PC-9 (cell line): ENCODE measurements at regions of chr15 and their contacts with region 1.

Region 1: GRCh38 chr15:64355944-64356709 is at the start of gene CSNK1G1:
- DNase-seq: peak; percentile 88 to 95
- H3K4me3 ChIP-seq: peak within 1 kb of the TSS; percentile 82
- H3K27ac ChIP-seq: peak within 1 kb of the TSS; percentile 58
- H3K4me1 ChIP-seq: peaks cover 6% of the 10 kb centered on the region
- H3K27me3 ChIP-seq: no peaks in the 10 kb centered on the region
- CTCF ChIP-seq: peak; percentile 61
- total RNA-seq, gene CSNK1G1: 16.4 and 19.6 TPM in 2 replicates

Region 2: GRCh38 chr15:64162870-64163658 is 193.1 kb before region 1 on chr15 and contains the start of gene PPIB:
- CTCF ChIA-PET with region 1: no interaction called
- POLR2A ChIA-PET with region 1: no interaction called
- intact Hi-C with region 1: loop called (anchors 1 kb)
- DNase-seq: peak; percentile 85 to 97
- H3K4me3 ChIP-seq: peak within 1 kb of the TSS; percentile 95
- H3K27ac ChIP-seq: peak within 1 kb of the TSS; percentile 51
- H3K4me1 ChIP-seq: no peaks in the 10 kb centered on the region; the same call in none of the 2 replicates
- H3K27me3 ChIP-seq: no peaks in the 10 kb centered on the region
- CTCF ChIP-seq: no peak; the same call in 1 of the 2 replicates
- total RNA-seq, gene PPIB: 308 and 345 TPM in 2 replicates

Region 3: DNA sequence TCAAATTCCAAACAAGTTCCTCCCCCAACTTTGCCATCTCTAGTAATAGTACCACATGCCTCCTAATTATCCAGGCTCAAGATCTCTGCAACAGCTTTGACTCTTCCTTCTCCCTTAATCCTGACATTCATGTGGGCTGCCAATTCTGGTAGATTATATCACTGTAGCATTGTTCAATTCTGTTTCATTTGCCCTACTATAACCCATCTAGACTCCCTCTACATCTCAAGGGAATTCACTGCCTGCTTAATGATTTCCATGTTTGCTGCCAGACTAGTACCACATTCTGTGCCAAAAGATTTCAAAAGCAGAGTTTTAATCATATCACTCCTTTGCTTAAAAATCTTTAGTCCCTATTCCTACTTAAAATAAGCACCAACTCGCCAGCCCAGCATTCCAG is 158.7 kb before region 1 on chr15:
- CTCF ChIA-PET with region 1: interaction called, 3 read pairs
- POLR2A ChIA-PET with region 1: interaction called, 12 read pairs
- intact Hi-C with region 1: no loop called
- DNase-seq: no peak
- H3K4me3 ChIP-seq: no peak overlapping the region
- H3K27ac ChIP-seq: no peak overlapping the region
- H3K4me1 ChIP-seq: no peaks in the 10 kb centered on the region
- H3K27me3 ChIP-seq: no peaks in the 10 kb centered on the region
- CTCF ChIP-seq: no peak

Region 4: DNA sequence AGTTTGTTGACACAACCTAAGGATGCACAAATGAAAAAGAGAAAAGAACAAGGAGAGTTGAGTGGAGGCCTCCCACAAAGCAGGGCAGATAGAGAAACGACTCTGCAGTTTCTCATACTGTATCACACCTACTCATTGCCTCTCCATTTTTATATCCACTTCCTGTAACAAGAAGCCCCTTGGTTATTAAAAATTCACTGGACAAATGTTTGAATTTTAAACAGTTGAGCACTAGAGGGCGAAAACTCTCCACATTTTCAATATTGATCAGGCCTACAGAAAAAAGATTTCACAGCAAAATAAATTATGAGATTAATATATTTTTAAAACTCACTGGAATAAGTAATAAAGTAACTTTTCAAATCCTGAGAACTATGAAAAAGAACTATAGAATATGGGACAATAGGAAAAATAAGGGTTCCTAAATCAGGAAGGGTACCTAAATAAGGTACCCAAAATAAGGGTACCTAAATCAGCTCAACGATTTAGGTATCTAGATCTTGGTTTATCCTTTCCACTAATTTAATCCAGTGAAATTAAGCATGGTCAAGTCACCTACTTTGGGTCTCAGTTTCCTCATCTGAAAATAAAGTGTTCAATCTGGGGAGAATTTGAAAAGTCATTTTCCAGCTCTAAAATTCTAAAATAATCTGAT is 146.3 kb before region 1 on chr15:
- CTCF ChIA-PET with region 1: interaction called, 3 read pairs
- POLR2A ChIA-PET with region 1: no interaction called
- intact Hi-C with region 1: loop called (anchors 1 kb)
- DNase-seq: peak in 1 of 2 experiments; percentile 61
- H3K4me3 ChIP-seq: no peak overlapping the region
- H3K27ac ChIP-seq: 0 out of 2 replicates have a peak overlapping the region, but pooled peaks have one; percentile 9
- H3K4me1 ChIP-seq: no peaks in the 10 kb centered on the region
- H3K27me3 ChIP-seq: no peaks in the 10 kb centered on the region
- CTCF ChIP-seq: peak; percentile 73

Region 5: GRCh38 chr15:64387562-64388168 is 31.5 kb after region 1 on chr15 and contains the start of gene TRIP4:
- CTCF ChIA-PET with region 1: no interaction called
- POLR2A ChIA-PET with region 1: no interaction called
- intact Hi-C with region 1: loop called (anchors 1 kb)
- DNase-seq: peak; percentile 89 to 94
- H3K4me3 ChIP-seq: peak within 1 kb of the TSS; percentile 95
- H3K27ac ChIP-seq: peak within 1 kb of the TSS; percentile 74
- H3K4me1 ChIP-seq: no peaks in the 10 kb centered on the region
- H3K27me3 ChIP-seq: no peaks in the 10 kb centered on the region
- CTCF ChIP-seq: no peak
- total RNA-seq, gene TRIP4: 15.5 and 18.1 TPM in 2 replicates

Region 6: GRCh38 chr15:64398575-64398974 is 42.4 kb after region 1 on chr15:
- CTCF ChIA-PET with region 1: no interaction called
- POLR2A ChIA-PET with region 1: interaction called, 14 read pairs
- intact Hi-C with region 1: no loop called
- DNase-seq: no peak
- H3K4me3 ChIP-seq: no peak overlapping the region
- H3K27ac ChIP-seq: no peak overlapping the region
- H3K4me1 ChIP-seq: no peaks in the 10 kb centered on the region
- H3K27me3 ChIP-seq: no peaks in the 10 kb centered on the region
- CTCF ChIP-seq: no peak